Calu3 (cell line): ENCODE measurements at regions of chr21 and their contacts with region 1.

Region 1: GRCh38 chr21:22040975-22041374 is 1042.8 kb downstream of the NCAM2 start:
- DNase-seq: no peak
- H3K4me3 Mint-ChIP-seq: no peak overlapping the region
- H3K27ac Mint-ChIP-seq: no peak overlapping the region
- H3K4me1 Mint-ChIP-seq: no peaks in the 10 kb centered on the region
- H3K27me3 Mint-ChIP-seq: no peaks in the 10 kb centered on the region
- CTCF ChIP-seq: no peak

Region 2: DNA sequence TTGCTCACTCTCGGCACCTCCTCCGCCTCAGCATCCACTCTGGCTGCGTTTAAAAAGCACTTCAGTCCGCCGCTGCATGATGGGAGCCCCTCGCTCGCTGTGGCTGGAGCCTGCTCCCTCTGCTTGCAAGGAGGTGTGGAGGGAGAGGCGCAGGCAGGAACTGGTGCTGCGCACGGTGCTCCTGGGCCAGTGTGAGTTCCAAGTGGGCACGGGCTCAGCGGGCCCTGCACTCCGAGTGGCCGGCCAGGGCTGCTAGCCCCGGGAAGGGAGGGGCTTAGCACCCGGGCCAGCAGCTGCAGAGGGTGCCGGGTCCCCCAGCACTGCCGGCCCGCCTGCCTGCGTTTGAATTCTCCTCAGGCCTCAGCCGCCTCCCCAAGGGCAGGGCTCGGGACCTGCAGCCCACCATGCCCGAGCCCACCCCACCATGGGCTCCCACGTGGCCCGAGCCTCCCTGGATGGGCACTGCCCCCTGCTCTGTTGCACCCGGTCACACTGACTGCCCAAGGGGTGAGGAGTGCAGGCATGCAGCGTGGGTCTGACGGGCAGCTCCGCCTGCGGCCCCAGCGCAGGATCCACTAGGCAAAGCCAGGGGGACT is 556.8 kb after region 1 on chr21:
- CTCF ChIA-PET with region 1: interaction called, 10 read pairs
- intact Hi-C with region 1: no loop called
- DNase-seq: no peak
- H3K4me3 Mint-ChIP-seq: no peak overlapping the region
- H3K27ac Mint-ChIP-seq: no peak overlapping the region
- H3K4me1 Mint-ChIP-seq: no peaks in the 10 kb centered on the region
- H3K27me3 Mint-ChIP-seq: no peaks in the 10 kb centered on the region
- CTCF ChIP-seq: no peak